Activated CD8-positive, alpha-beta T cell treated with anti-CD3 and anti-CD28 coated beads for 36 hours (primary cell): ENCODE measurements at regions of chr4 and their contacts with region 1.

Region 1: DNA sequence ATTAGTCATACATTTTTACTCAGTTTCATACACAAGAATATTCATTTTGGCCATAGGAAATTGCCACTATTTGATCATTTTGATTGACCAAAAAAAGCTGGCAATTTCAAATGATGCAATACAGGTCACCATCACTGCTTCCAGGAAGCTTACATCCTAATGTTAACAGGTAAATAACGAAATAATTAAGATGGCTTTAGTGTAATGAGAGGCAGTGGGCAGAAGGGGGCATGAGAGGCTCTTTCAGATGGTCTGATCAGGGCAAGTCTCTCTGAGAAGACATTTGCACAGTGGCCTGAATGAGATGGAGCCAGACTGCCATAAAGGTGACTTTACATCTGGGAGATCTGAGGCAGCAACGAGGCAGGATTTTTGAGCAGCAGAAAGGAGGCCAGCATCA is 170.7 kb downstream of the SLIT2 start:
- DNase-seq: peak; percentile 54
- ATAC-seq: peak; percentile 83
- H3K4me3 Mint-ChIP-seq: no peak overlapping the region
- H3K27ac Mint-ChIP-seq: no peak overlapping the region
- H3K4me1 Mint-ChIP-seq: peaks cover 4% of the 10 kb centered on the region
- H3K27me3 Mint-ChIP-seq: peaks cover 2% of the 10 kb centered on the region
- CTCF ChIP-seq: peak; percentile 69

Region 2: DNA sequence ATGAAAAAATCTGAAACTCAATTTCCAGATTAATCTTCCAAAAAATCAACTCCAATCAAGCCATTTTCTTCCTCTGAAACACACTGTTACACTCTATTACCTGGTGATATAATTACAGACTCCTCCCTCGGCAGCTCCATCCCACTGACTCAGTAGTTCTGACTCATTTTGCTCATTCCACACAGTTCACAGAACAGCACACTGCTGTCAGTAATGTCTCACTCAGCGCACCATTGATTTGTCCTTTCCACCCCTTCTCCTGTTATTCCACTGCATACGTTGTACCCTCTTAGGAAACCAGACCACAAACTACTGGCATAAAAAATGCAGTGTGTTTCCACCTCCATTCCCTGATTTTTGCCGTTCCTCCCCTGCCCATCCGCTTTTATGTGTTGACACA is 42.0 kb after region 1 on chr4:
- CTCF ChIA-PET with region 1: no interaction called
- POLR2A ChIA-PET with region 1: no interaction called
- intact Hi-C with region 1: no loop called
- DNase-seq: no peak
- ATAC-seq: no peak
- H3K4me3 Mint-ChIP-seq: no peak overlapping the region
- H3K27ac Mint-ChIP-seq: no peak overlapping the region
- H3K4me1 Mint-ChIP-seq: no peaks in the 10 kb centered on the region
- H3K27me3 Mint-ChIP-seq: no peaks in the 10 kb centered on the region
- CTCF ChIP-seq: no peak

Region 3: DNA sequence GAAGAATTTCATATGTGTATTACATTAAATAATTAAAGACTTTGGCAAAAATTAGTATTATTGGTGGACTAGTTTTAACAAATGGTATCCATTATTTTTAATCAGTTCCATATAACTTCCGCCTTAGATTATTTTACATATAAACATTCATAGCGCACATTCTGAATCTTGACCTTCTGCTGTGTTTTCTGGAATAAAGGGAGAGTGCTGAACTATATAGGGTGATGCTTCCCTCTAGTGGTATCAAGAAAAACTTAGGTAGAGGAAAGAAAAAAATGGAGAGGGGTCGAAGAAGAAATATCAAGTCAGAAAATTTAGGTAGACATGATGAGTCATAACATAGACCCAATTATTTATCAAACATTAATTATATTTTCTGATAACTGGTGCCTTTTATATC is 122.2 kb after region 1 on chr4:
- CTCF ChIA-PET with region 1: interaction called, 3 read pairs
- POLR2A ChIA-PET with region 1: no interaction called
- intact Hi-C with region 1: loop called (anchors 5 kb)
- DNase-seq: no peak
- ATAC-seq: no peak
- H3K4me3 Mint-ChIP-seq: no peak overlapping the region
- H3K27ac Mint-ChIP-seq: no peak overlapping the region
- H3K4me1 Mint-ChIP-seq: no peaks in the 10 kb centered on the region
- H3K27me3 Mint-ChIP-seq: no peaks in the 10 kb centered on the region
- CTCF ChIP-seq: no peak